Heart left ventricle (tissue), 16 donors: ENCODE measurements at regions of chr9 and their contacts with region 1.

Region 1: GRCh38 chr9:37746848-37747753 is 6.5 kb upstream of the TRMT10B start:
- DNase-seq: peak in 2 of 5 donors; percentile 39 to 49
- ATAC-seq: peak in 3 of 4 donors; percentile 77 to 88 (median 78)
- H3K4me3 ChIP-seq: no peak overlapping the region
- H3K27ac ChIP-seq: no peak overlapping the region
- H3K4me1 ChIP-seq: no peaks in the 10 kb centered on the region
- H3K27me3 ChIP-seq: no peaks in the 10 kb centered on the region
- CTCF ChIP-seq: peak; percentile 76 to 94 (median 84)
- POLR2A ChIP-seq: no peak

Region 2: GRCh38 chr9:37784616-37785483 is 37.7 kb after region 1 on chr9 and contains the start of gene EXOSC3:
- intact Hi-C with region 1: no loop called
- DNase-seq: peak; percentile 88 to 93 (median 92)
- ATAC-seq: peak; percentile 95 to 98 (median 98)
- H3K4me3 ChIP-seq: peak within 1 kb of the TSS; percentile 74 to 98 (median 88)
- H3K27ac ChIP-seq: peak within 1 kb of the TSS; percentile 25 to 90 (median 84)
- H3K4me1 ChIP-seq: peaks cover 3 to 28% (median 18%) of the 10 kb centered on the region in 12 donors
- H3K27me3 ChIP-seq: peaks cover 0 to 9% (median 0%) of the 10 kb centered on the region in 9 donors
- CTCF ChIP-seq: peak in 7 of 12 donors; percentile 9 to 24 (median 16)
- POLR2A ChIP-seq: peak in 1 of 2 donors; percentile 70
- total RNA-seq, gene EXOSC3: 9.6 to 18.6 (median 14.0) TPM

Region 3: GRCh38 chr9:37806271-37806670 is 59.2 kb after region 1 on chr9:
- intact Hi-C with region 1: loop called in 1 of 10 experiments (anchors 5 kb)
- DNase-seq: no peak
- ATAC-seq: no peak
- H3K4me3 ChIP-seq: no peak overlapping the region
- H3K27ac ChIP-seq: no peak overlapping the region
- H3K4me1 ChIP-seq: peaks cover 0 to 36% (median 21%) of the 10 kb centered on the region in 12 donors
- H3K27me3 ChIP-seq: no peaks in the 10 kb centered on the region
- CTCF ChIP-seq: no peak
- POLR2A ChIP-seq: no peak

Region 4: DNA sequence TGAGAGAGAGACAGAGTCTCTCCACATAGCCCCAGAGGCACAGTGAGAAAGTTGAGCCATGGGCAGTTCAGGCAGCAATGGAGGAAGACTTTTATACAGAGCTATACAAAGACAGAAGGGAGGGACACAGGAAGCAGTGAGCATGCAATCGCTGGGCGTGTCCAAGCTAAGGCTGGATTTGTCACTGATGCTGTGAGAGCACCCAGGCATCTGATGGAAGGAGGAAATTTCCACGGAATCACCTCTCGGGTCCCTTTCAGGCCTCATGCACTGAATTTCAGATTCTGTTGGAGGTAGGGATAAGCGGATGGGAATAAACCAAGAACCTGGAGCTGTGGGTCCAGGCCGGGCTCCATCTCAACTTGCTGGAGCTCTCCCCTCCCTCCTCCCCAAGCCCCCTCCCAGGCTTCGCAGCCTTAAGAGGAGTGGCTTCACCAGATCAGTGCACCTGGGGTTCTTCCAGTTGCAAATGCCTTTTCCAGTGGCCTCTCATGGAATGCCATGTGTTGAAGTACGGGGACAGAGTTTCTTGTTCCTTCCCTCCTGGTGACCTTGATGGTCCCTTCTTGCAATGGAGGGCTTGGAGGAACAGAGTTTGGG is 530.6 kb after region 1 on chr9:
- intact Hi-C with region 1: loop called in 1 of 10 experiments (anchors 10 kb)
- DNase-seq: no peak
- ATAC-seq: no peak
- H3K4me3 ChIP-seq: no peak overlapping the region
- H3K27ac ChIP-seq: no peak overlapping the region
- H3K4me1 ChIP-seq: no peaks in the 10 kb centered on the region
- H3K27me3 ChIP-seq: peaks cover 0 to 10% (median 0%) of the 10 kb centered on the region in 9 donors
- CTCF ChIP-seq: no peak
- POLR2A ChIP-seq: no peak

Region 5: GRCh38 chr9:38362852-38363593 is 615.9 kb after region 1 on chr9:
- intact Hi-C with region 1: loop called in 4 of 10 experiments (anchors 5 to 10 kb)
- DNase-seq: peak in 3 of 5 donors; percentile 20 to 44 (median 26)
- ATAC-seq: peak; percentile 73 to 90 (median 81)
- H3K4me3 ChIP-seq: peak overlapping the region in 1 of 12 donors; percentile 32
- H3K27ac ChIP-seq: no peak overlapping the region
- H3K4me1 ChIP-seq: peaks cover 0 to 9% (median 0%) of the 10 kb centered on the region in 12 donors
- H3K27me3 ChIP-seq: no peaks in the 10 kb centered on the region
- CTCF ChIP-seq: peak; percentile 36 to 72 (median 66)
- POLR2A ChIP-seq: no peak

Region 6: DNA sequence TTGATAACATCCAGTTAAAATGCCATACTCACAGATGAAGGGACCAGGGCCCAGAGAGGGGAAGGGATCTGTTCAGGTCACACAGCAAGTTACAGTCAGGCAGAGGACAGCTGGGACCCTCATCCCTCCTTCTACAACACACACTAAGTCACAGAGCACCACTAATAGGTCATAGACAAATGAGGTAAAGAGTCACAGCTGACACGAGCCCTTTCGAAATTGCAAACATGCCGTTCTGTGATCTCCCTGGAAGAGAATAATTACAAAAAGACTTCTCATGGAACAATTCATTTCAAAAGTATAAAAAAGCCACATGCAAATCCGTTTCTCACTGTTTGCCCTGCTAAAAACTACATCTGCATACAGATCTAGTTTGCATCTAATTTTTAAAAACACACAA is 661.6 kb after region 1 on chr9:
- intact Hi-C with region 1: loop called in 4 of 10 experiments (anchors 5 to 10 kb)
- DNase-seq: no peak
- ATAC-seq: no peak
- H3K4me3 ChIP-seq: no peak overlapping the region
- H3K27ac ChIP-seq: no peak overlapping the region
- H3K4me1 ChIP-seq: no peaks in the 10 kb centered on the region
- H3K27me3 ChIP-seq: peaks cover 0 to 51% (median 10%) of the 10 kb centered on the region in 9 donors
- CTCF ChIP-seq: no peak
- POLR2A ChIP-seq: no peak